BJ (cell line): ENCODE measurements at regions of chr5 and their contacts with region 1.

Region 1: DNA sequence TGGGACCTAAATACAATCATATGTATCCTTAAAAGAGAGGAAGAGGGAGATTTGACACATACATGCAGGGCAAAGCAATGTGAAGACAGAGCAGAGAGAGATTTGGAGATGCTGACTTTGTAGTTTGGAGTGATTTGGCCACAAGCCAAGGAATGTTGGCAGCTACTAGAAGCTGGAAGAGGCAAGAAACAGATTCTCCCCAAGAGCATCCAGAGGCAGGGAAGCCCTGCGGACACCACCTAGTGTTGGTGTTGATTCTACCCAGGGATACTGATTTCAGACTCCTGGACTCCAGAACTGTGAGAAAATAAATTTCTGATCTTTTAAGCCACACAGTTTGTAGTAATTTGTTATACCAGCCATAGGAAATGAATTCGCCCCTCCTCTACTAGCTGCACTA is 64.9 kb upstream of the OSMR start:
- DNase-seq: no peak
- H3K4me3 ChIP-seq: no peak overlapping the region
- H3K27me3 ChIP-seq: no peaks in the 10 kb centered on the region; the same call in 1 of the 2 replicates
- CTCF ChIP-seq: peak; percentile 39

Region 2: DNA sequence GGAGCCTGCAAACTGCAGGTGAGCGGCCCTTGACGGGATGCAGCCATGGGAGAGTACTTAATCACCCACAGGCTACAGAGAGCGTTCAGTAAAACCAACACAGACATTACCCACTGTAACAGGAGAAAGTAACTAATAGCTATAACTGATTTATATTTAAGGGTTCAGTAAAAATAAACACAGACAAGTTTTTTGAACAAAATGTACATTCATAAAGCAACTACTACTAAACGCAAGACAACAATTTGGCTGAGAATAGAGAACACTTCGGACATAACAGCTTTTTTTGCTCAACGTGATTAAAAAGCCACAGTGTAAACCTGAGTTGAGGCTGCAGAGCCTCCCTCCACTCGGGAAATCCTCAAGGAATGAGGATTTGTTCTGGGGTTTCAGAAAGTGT is 286.2 kb before region 1 on chr5:
- CTCF ChIA-PET with region 1: no interaction called
- POLR2A ChIA-PET with region 1: interaction called, 15 read pairs
- DNase-seq: no peak
- H3K4me3 ChIP-seq: no peak overlapping the region
- H3K27me3 ChIP-seq: no peaks in the 10 kb centered on the region
- CTCF ChIP-seq: no peak